A673 (cell line): ENCODE measurements at regions of chr5 and their contacts with region 1.

Region 1: GRCh38 chr5:36414869-36415282 is 113.2 kb upstream of the RANBP3L start:
- DNase-seq: peak; percentile 75
- H3K4me3 ChIP-seq: no peak overlapping the region
- H3K27ac ChIP-seq: no peak overlapping the region
- H3K4me1 ChIP-seq: no peaks in the 10 kb centered on the region
- H3K27me3 ChIP-seq: no peaks in the 10 kb centered on the region
- CTCF ChIP-seq: peak; percentile 66

Region 2: DNA sequence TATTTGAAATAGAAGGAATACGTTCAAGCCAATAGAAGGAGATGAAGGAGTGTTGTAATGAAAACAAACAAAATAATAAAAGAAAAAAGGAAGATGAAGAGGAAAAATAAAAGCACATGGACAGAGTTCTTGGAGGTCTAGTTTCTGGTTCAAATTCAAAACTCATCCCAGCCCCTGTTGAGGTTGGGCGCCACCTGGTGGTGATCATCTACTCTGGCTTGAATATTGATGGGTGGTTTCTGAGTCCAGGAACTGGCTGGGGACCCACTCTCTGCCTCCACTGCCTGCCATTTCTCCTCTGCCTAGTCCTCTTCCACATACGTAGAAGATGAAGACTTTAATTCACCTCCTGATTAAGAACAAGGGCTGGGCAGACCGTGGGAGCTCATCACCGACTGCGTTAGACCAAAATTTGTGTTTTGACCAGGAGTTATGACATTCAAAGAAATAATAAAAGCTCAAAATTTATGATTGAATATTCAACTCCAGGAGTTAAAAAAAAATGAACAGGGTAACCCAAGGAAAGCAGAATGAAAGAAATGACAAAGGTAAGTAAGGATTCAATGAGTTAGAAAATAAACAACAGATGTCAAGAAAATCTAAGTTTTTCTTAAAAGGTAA is 92.6 kb after region 1 on chr5:
- CTCF ChIA-PET with region 1: interaction called, 7 read pairs
- POLR2A ChIA-PET with region 1: no interaction called
- intact Hi-C with region 1: loop called (anchors 1 kb)
- DNase-seq: peak; percentile 85
- H3K4me3 ChIP-seq: no peak overlapping the region
- H3K27ac ChIP-seq: no peak overlapping the region
- H3K4me1 ChIP-seq: no peaks in the 10 kb centered on the region
- H3K27me3 ChIP-seq: no peaks in the 10 kb centered on the region
- CTCF ChIP-seq: peak; percentile 88

Region 3: DNA sequence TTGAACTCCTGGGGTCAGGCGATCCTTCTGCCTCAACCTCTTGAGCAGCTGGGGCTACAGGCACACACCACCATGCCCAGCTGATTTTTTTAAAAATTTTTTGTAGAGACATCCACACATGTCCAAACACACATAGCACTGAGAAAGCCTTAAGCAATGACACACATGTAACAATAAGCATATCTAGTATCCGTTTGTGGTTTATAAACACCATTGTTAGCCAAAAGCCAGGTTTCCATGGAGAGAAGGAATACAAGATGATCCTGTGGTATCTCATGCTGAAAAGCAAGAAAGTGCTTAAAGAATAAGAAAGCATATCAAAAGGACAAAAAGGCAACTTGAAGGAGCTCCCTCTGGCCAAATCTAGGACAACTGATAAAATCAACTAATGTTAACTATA is 161.8 kb after region 1 on chr5:
- CTCF ChIA-PET with region 1: no interaction called
- POLR2A ChIA-PET with region 1: no interaction called
- intact Hi-C with region 1: no loop called
- DNase-seq: no peak
- H3K4me3 ChIP-seq: no peak overlapping the region
- H3K27ac ChIP-seq: no peak overlapping the region
- H3K4me1 ChIP-seq: no peaks in the 10 kb centered on the region
- H3K27me3 ChIP-seq: no peaks in the 10 kb centered on the region
- CTCF ChIP-seq: no peak

Region 4: DNA sequence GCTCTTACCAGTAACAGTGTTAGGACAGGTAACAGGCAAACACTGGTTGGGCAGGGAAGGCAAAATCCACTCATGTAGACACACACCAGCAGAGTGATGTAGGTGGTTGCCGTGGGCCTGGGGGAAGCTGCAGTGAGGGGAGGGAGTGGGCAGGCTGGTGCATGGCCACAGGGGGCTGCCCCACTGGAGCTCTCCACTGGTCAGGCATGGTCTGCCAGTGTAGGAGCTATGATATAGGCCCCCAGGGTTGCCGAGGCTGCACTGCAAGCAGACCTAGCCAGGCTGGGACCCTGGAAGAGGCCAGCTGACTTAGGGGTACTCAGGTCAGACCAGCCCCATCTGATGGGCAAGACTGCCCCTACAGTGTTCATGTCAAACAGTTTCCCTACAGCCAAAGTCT is 1270.3 kb after region 1 on chr5:
- CTCF ChIA-PET with region 1: no interaction called
- POLR2A ChIA-PET with region 1: no interaction called
- intact Hi-C with region 1: no loop called
- DNase-seq: no peak
- H3K4me3 ChIP-seq: no peak overlapping the region
- H3K27ac ChIP-seq: no peak overlapping the region
- H3K4me1 ChIP-seq: no peaks in the 10 kb centered on the region
- H3K27me3 ChIP-seq: no peaks in the 10 kb centered on the region
- CTCF ChIP-seq: no peak